Tibial artery (tissue), 4 donors: ENCODE measurements at regions of chrX and their contacts with region 1.

Region 1: DNA sequence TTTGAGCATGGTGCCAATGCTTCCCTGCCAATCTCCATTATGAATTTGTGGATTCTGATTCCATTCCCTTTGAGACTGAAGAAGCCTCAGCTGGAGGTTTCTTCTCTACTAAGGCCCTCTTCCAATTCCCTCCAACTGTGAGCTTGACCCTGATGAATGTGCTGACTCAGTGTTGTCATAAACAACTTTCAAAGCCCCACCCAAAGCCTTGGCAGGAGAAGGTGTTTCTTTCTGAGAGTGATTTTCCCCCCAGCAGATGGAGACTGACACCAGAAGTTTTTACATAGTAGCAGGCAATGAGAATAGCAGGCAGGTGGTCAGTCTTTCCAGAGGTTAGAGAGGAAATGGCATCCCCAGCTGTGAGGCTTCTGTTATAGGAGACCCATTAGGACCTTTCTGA is 53.1 kb downstream of the OCRL start:
- DNase-seq: no peak
- H3K4me3 ChIP-seq: no peak overlapping the region
- H3K27ac ChIP-seq: no peak overlapping the region
- H3K4me1 ChIP-seq: no peaks in the 10 kb centered on the region
- H3K27me3 ChIP-seq: no peaks in the 10 kb centered on the region
- CTCF ChIP-seq: no peak

Region 2: DNA sequence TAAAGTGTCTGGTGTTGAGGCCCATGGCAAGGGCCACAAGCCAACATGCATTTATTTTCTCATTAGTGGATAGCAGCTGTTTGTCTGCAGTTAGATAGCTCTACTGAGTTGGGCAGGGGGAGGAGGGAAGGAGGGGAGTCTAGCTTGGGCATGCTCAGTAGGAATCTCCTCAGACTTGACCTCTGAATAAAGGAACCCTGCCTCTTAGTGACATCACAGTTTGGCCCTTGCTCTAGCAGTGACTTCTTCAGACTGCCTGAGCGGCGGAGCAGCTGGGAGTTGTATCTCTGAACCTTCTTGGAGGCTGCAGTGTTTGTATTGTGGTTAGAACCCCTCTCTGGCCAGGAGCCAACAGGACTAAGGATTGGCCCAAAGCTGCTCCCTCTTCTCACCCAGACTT is 446.7 kb after region 1 on chrX:
- intact Hi-C with region 1: loop called (anchors 10 kb)
- DNase-seq: no peak
- H3K4me3 ChIP-seq: no peak overlapping the region
- H3K27ac ChIP-seq: no peak overlapping the region
- H3K4me1 ChIP-seq: no peaks in the 10 kb centered on the region
- H3K27me3 ChIP-seq: no peaks in the 10 kb centered on the region
- CTCF ChIP-seq: no peak

Region 3: DNA sequence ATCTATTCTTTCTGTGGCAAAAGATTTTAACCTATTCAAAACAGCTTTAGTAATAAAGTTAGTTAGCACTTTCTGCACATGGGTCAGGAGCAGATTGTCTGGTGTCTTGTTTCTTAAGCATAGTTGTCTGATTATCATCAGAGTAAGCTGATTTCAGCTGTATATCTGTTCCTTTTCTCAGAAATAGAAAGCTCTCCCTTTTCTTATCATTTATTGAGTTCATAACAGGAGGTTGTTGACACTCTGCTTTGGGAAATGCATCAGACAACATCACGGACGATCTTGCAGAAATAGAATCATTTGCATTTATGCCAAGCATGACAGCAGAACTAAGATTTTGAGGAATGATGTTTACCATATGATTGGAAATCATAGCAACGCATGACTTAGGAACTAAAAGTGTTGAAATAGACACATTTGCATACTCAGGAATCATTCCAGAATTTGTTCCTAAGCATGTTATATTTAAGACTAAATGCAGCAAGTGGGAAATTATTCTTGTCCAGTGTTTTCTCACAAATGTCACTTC is 875.3 kb after region 1 on chrX:
- intact Hi-C with region 1: no loop called
- DNase-seq: no peak
- H3K4me3 ChIP-seq: no peak overlapping the region
- H3K27ac ChIP-seq: no peak overlapping the region
- H3K4me1 ChIP-seq: no peaks in the 10 kb centered on the region
- H3K27me3 ChIP-seq: no peaks in the 10 kb centered on the region
- CTCF ChIP-seq: no peak